GM12878 (cell line): ENCODE measurements at regions of chr4 and their contacts with region 1.

Region 1: DNA sequence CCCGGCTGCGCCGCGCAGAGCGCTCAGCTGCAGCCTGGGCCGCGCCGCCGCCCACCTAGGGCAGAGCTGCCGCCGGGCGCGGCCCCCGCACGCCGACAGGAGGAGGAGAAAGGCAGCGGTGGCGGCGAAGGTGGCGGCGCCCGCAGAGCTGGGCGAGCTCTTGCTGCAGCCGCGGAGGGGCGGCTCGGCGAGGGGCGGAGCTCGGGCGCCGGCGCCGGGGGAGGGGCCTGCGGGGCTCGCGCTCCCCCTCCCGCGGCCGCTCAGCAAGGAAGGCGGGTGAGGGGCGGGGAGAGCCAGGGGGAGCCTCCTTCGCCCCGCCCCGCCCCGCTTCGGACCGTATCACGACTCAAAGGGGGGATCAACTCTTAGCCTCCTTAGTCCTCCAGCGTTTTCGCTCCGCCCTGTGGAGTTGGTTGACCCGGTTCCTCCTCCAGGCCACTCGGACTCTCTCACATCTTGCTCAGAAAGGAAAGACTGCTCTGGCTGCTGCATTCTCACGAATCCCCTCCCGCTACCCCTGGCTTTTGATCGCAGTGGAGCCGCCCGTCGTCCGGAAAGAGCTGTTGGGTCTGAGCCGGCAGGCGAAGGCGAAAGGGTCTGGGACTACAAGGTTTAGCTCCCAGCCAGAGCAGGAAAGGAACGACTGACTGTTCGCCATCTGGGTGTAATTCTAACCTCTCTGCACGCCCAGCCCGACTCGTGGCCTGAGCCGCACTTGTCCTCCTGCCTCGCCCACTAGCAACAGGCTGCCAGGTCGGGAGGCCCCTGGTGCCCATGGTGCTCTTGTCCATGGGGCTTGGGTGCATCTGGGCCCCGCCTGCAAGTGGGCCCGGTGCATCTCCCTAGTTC is at the start of gene ATP8A1:
- DNase-seq: no peak
- ATAC-seq: peak; percentile 81
- H3K4me3 ChIP-seq: peak within 1 kb of the TSS; percentile 93
- H3K27ac ChIP-seq: peak within 1 kb of the TSS; percentile 91
- H3K4me1 ChIP-seq: peaks cover 5% of the 10 kb centered on the region; the same call in 1 of the 2 replicates
- H3K27me3 ChIP-seq: no peaks in the 10 kb centered on the region
- CTCF ChIP-seq: 0 out of 6 replicates have a peak, but pooled peaks of 1 of the 3 experiments have one; percentile 3
- EP300 ChIP-seq: 0 out of 4 replicates have a peak, but pooled peaks of 1 of the 2 experiments have one; percentile 18
- POLR2A ChIP-seq: peak; percentile 93
- RAD21 ChIP-seq: no peak
- polyA plus RNA-seq, gene ATP8A1: 9.0 to 9.5 TPM

Region 2: GRCh38 chr4:42568610-42569207 is 88.5 kb before region 1 on chr4:
- CTCF ChIA-PET with region 1: interaction called, 17 read pairs
- POLR2A ChIA-PET with region 1: interaction called, 4 read pairs
- RAD21 ChIA-PET with region 1: interaction called, 25 read pairs
- SMC1A ChIA-PET with region 1: interaction called, 9 read pairs
- in situ Hi-C with region 1: no loop called
- intact Hi-C with region 1: loop called (anchors 2 kb)
- DNase-seq: peak; percentile 25
- ATAC-seq: peak; percentile 96
- H3K4me3 ChIP-seq: no peak overlapping the region
- H3K27ac ChIP-seq: no peak overlapping the region
- H3K4me1 ChIP-seq: no peaks in the 10 kb centered on the region
- H3K27me3 ChIP-seq: no peaks in the 10 kb centered on the region
- CTCF ChIP-seq: peak; percentile 59 to 73 (median 65)
- EP300 ChIP-seq: no peak
- POLR2A ChIP-seq: no peak
- RAD21 ChIP-seq: peak; percentile 94

Region 3: DNA sequence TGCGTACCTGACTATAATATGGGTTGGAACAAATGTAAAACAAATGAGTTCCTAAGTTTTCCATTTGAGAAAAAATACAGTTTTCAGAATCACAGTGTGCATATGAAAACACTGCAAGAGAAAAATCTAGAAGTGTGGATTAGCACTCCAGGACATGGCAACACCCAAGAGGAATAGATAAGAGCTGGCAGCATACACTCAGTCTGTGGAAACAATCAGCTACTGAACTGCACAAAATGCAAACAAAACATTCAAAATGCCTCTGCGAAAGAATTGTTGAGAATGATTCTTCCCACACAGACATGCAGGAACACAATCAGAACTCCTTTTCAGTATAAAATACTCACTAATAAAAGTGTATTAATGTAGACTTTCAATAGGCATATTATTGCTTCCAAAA is 40.1 kb before region 1 on chr4:
- CTCF ChIA-PET with region 1: interaction called, 3 read pairs
- POLR2A ChIA-PET with region 1: no interaction called
- RAD21 ChIA-PET with region 1: interaction called, 11 read pairs
- SMC1A ChIA-PET with region 1: interaction called, 478 read pairs
- in situ Hi-C with region 1: no loop called
- intact Hi-C with region 1: no loop called
- DNase-seq: no peak
- ATAC-seq: no peak
- H3K4me3 ChIP-seq: no peak overlapping the region
- H3K27ac ChIP-seq: no peak overlapping the region
- H3K4me1 ChIP-seq: no peaks in the 10 kb centered on the region
- H3K27me3 ChIP-seq: no peaks in the 10 kb centered on the region
- CTCF ChIP-seq: no peak
- EP300 ChIP-seq: no peak
- POLR2A ChIP-seq: no peak
- RAD21 ChIP-seq: no peak

Region 4: GRCh38 chr4:42633605-42634388 is 23.4 kb before region 1 on chr4:
- CTCF ChIA-PET with region 1: interaction called, 7 read pairs
- POLR2A ChIA-PET with region 1: interaction called, 167 read pairs
- RAD21 ChIA-PET with region 1: interaction called, 252 read pairs
- SMC1A ChIA-PET with region 1: interaction called, 478 read pairs
- in situ Hi-C with region 1: no loop called
- intact Hi-C with region 1: loop called (anchors 1 kb)
- DNase-seq: no peak
- ATAC-seq: peak; percentile 73
- H3K4me3 ChIP-seq: 0 out of 2 replicates have a peak overlapping the region, but pooled peaks have one; percentile 8
- H3K27ac ChIP-seq: peak overlapping the region; percentile 49
- H3K4me1 ChIP-seq: peaks cover 54% of the 10 kb centered on the region
- H3K27me3 ChIP-seq: no peaks in the 10 kb centered on the region
- CTCF ChIP-seq: no peak
- EP300 ChIP-seq: peak; percentile 94 to 96
- POLR2A ChIP-seq: no peak
- RAD21 ChIP-seq: no peak

Region 5: DNA sequence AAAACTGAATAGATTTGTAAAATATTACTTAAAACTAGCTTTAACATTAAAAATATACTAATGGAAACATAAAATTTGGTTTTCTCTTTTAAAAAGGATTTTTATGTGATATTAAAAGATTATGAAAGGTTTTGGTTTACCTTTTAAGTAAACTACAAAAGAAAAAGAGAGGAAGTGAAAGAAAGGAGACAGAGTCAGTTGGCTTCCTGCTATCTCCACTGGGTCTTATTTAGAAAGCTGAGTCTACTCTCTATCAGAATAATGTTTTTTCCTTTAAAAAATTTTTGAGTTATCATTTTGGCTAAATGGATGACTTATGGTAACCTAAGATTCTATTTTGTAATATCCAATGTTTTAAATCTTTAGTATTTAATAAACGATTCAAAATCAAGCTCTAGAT is 21.3 kb after region 1 on chr4:
- CTCF ChIA-PET with region 1: interaction called, 9 read pairs
- POLR2A ChIA-PET with region 1: interaction called, 6 read pairs
- RAD21 ChIA-PET with region 1: interaction called, 13 read pairs
- SMC1A ChIA-PET with region 1: interaction called, 31 read pairs
- in situ Hi-C with region 1: no loop called
- intact Hi-C with region 1: no loop called
- DNase-seq: no peak
- ATAC-seq: peak; percentile 62
- H3K4me3 ChIP-seq: no peak overlapping the region
- H3K27ac ChIP-seq: no peak overlapping the region
- H3K4me1 ChIP-seq: peaks cover 6% of the 10 kb centered on the region; the same call in 1 of the 2 replicates
- H3K27me3 ChIP-seq: no peaks in the 10 kb centered on the region
- CTCF ChIP-seq: no peak
- EP300 ChIP-seq: no peak
- POLR2A ChIP-seq: no peak
- RAD21 ChIP-seq: no peak

Region 6: DNA sequence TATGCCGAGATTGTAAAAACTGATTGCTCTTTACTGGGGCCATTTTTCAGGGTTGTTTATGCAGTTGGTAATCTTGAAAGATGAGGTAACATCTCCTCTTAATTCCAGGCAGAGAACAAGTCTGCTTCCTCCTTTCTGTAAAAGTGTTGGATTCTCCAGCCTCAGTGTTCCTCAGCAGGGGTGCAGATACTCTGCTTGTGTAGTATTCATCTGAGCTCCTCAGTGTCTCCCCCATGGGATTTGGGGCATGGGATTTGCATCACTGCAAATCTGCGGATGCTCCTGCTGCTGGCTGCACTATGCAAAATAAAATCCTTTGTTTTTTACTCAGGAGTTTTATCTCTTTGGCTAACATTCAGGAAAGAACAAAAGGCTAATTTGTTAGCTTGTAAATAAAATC is 104.6 kb after region 1 on chr4:
- CTCF ChIA-PET with region 1: no interaction called
- POLR2A ChIA-PET with region 1: no interaction called
- RAD21 ChIA-PET with region 1: no interaction called
- SMC1A ChIA-PET with region 1: no interaction called
- in situ Hi-C with region 1: no loop called
- intact Hi-C with region 1: no loop called
- DNase-seq: no peak
- ATAC-seq: no peak
- H3K4me3 ChIP-seq: no peak overlapping the region
- H3K27ac ChIP-seq: no peak overlapping the region
- H3K4me1 ChIP-seq: no peaks in the 10 kb centered on the region
- H3K27me3 ChIP-seq: no peaks in the 10 kb centered on the region; a peak in 2 of 4 replicates
- CTCF ChIP-seq: no peak
- EP300 ChIP-seq: no peak
- POLR2A ChIP-seq: no peak
- RAD21 ChIP-seq: no peak

Region 7: DNA sequence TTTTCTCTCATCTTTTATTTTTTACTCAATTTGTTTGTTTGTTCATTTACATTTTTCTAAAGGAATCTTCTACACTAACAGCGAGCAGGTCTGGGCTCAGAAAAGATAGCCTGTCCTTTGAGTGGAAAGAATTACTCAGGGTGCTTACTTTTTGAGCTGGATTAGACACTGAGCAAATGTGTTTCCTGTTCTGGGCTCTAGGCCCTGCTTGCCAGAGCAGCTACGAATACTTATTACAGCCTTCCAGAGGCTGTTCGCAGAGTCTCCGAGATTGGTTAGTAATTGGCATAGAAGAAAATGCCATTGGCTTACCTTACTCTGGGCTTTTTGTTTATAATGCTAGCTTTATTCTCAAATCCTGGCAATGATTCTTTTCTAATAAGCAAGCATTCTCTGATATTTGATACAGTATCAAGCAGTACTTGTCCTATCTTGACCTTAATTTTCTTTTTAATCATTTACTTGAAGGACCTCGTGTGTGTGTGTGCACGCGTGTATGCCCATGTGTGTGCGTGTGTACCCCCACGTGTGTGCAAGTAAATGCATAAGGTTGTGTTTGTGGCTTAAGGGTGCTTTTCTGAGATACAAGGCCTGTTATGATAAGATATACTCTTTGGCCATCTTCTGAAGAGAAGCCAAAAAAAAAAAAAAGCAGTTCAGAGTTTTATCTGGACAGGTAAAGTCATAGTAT is 159.2 kb after region 1 on chr4:
- CTCF ChIA-PET with region 1: no interaction called
- POLR2A ChIA-PET with region 1: no interaction called
- RAD21 ChIA-PET with region 1: interaction called, 8 read pairs
- SMC1A ChIA-PET with region 1: no interaction called
- in situ Hi-C with region 1: no loop called
- intact Hi-C with region 1: loop called (anchors 5 kb)
- DNase-seq: no peak
- ATAC-seq: no peak
- H3K4me3 ChIP-seq: no peak overlapping the region
- H3K27ac ChIP-seq: no peak overlapping the region
- H3K4me1 ChIP-seq: no peaks in the 10 kb centered on the region
- H3K27me3 ChIP-seq: no peaks in the 10 kb centered on the region
- CTCF ChIP-seq: no peak
- EP300 ChIP-seq: no peak
- POLR2A ChIP-seq: no peak
- RAD21 ChIP-seq: no peak